PC-9 (cell line): ENCODE measurements at regions of chr21 and their contacts with region 1.

Region 1: GRCh38 chr21:33682992-33683627 is 40.8 kb downstream of the ITSN1 start:
- DNase-seq: peak; percentile 61 to 96
- H3K4me3 ChIP-seq: peak overlapping the region; percentile 14; the same call in 1 of the 2 replicates
- H3K27ac ChIP-seq: peak overlapping the region; percentile 85
- H3K4me1 ChIP-seq: peaks cover 64% of the 10 kb centered on the region
- H3K27me3 ChIP-seq: no peaks in the 10 kb centered on the region
- CTCF ChIP-seq: no peak

Region 2: GRCh38 chr21:33324291-33325221 is 358.6 kb before region 1 on chr21 and contains the start of gene IFNAR1:
- CTCF ChIA-PET with region 1: no interaction called
- POLR2A ChIA-PET with region 1: no interaction called
- intact Hi-C with region 1: no loop called
- DNase-seq: peak; percentile 80 to 92
- H3K4me3 ChIP-seq: peak within 1 kb of the TSS; percentile 97
- H3K27ac ChIP-seq: peak within 1 kb of the TSS; percentile 78
- H3K4me1 ChIP-seq: peaks cover 10% of the 10 kb centered on the region; the same call in 1 of the 2 replicates
- H3K27me3 ChIP-seq: no peaks in the 10 kb centered on the region
- CTCF ChIP-seq: no peak
- total RNA-seq, gene IFNAR1: 24.2 and 25.5 TPM in 2 replicates

Region 3: GRCh38 chr21:33588485-33589335 is 94.4 kb before region 1 on chr21 and contains the start of gene DONSON:
- CTCF ChIA-PET with region 1: no interaction called
- POLR2A ChIA-PET with region 1: interaction called, 11 read pairs
- intact Hi-C with region 1: no loop called
- DNase-seq: peak; percentile 53 to 93
- H3K4me3 ChIP-seq: peak within 1 kb of the TSS; percentile 81
- H3K27ac ChIP-seq: peak within 1 kb of the TSS; percentile 72
- H3K4me1 ChIP-seq: peaks cover 19% of the 10 kb centered on the region
- H3K27me3 ChIP-seq: no peaks in the 10 kb centered on the region
- CTCF ChIP-seq: no peak
- total RNA-seq, gene DONSON: 24.7 and 25.6 TPM in 2 replicates